ENCODE measurements at regions of chr19 and their contacts with region 1.

Region 1: DNA sequence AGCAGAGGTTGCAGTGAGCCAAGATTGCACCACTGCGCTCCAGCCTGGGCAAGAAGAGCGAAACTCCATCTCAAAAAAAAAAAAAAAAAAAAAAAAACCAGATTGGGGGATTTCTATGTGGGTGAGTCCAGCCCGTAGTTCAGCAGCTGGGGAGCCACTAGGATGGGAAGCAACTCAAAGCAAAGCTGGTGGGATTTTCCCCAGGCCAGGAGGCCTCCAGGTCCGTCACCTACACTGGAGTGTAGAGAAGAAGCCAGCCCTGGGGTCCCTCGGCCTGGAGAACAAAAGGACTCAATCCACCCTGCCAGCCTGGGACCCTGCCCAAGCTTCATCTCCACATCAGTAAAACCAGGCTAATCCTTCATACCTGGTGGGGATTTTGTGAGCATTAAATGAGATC is 121.3 kb upstream of the CACNA1A start:
- DNase-seq: no peak
- H3K4me3 ChIP-seq: no peak overlapping the region
- H3K27ac ChIP-seq: no peak overlapping the region
- H3K4me1 ChIP-seq: no peaks in the 10 kb centered on the region
- CTCF ChIP-seq: no peak

Region 2: GRCh38 chr19:13537454-13537853 is 90.1 kb before region 1 on chr19:
- CTCF ChIA-PET with region 1: no interaction called
- POLR2A ChIA-PET with region 1: interaction called, 11 read pairs
- intact Hi-C with region 1: no loop called
- DNase-seq: no peak
- H3K4me3 ChIP-seq: no peak overlapping the region
- H3K27ac ChIP-seq: no peak overlapping the region
- H3K4me1 ChIP-seq: no peaks in the 10 kb centered on the region
- CTCF ChIP-seq: no peak

Region 3: DNA sequence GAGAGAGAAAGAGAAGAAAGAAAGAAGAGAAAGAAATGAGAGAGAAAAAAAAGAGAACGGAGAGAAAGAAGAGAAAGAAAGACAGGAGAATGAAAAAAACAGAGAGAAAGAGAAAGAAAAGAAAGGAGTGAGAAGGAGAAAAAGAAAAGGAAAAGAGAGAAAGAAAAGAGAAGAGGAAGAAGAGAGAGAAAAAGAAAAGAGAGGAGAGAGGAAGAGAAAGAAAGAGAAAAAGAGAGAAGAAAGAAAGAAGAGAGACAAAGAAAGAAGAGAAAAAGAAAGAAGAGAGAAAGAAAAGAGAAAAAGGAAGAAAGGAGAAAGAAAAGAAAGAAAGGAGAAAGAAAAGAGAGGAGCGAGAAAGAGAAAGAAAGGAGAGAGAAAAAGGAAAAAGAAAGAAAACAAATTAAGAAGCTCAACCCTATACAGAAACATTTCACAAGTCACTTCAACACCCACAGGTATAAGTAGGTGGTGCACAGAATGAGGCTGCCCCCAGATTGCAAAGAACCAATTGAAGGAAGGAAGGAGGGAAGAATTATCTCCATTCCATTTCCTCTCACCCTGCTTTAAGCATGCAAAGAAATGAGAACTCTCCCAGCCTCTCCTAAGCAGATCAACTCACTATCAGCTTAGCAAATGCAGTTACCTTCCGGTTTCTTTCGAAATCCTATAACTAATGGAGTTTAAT is 22.5 kb before region 1 on chr19:
- CTCF ChIA-PET with region 1: no interaction called
- POLR2A ChIA-PET with region 1: no interaction called
- intact Hi-C with region 1: no loop called
- DNase-seq: no peak
- H3K4me3 ChIP-seq: no peak overlapping the region
- H3K27ac ChIP-seq: no peak overlapping the region
- H3K4me1 ChIP-seq: no peaks in the 10 kb centered on the region
- CTCF ChIP-seq: no peak

Region 4: GRCh38 chr19:13748169-13748828 is 120.8 kb after region 1 on chr19:
- CTCF ChIA-PET with region 1: no interaction called
- POLR2A ChIA-PET with region 1: no interaction called
- intact Hi-C with region 1: no loop called
- DNase-seq: peak; percentile 21
- H3K4me3 ChIP-seq: peak overlapping the region; percentile 88
- H3K27ac ChIP-seq: peak overlapping the region; percentile 29
- H3K4me1 ChIP-seq: peaks cover 10% of the 10 kb centered on the region
- CTCF ChIP-seq: no peak

Measured in OCI-LY7 (cell line).